Psoas muscle (tissue), 8 donors: ENCODE measurements at regions of chr15 and their contacts with region 1.

Region 1: DNA sequence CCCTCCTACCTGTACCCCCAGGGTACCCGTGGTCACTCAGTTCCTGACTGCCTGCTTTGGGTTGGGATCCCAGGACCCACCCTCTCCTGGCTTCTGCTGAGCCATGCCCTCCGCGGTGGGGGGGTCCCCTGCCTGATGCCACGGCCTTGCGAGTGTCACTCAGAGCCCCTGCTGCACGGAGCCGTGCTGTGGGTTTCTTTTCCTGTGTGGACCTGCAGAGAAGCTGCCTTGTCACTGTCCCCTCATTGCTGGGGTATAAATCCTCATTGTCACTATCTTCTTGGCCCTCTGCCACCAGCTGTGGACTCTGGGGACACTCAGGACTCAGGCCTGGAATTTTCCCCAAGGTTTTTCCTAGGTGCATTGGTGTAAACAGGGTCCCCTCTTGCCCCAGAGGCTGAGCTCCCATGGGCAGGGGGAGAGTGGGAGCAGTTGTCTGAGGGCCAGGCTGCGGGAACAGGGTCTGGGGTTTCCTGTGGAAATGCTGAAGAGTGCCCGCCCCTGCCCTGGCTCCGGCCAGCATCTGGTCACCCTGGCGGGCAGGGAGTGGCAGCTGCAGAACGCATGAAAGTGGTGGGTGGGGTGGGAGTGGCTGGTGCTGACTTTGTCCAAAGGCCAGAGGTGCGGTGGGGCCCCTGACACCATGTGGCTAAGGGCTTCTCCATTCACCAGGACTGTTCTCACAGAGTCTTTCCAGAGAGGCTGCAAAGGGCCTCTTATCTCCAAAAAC is 191.7 kb downstream of the GOLGA6L6 start:
- DNase-seq: peak; percentile 22 to 59
- ATAC-seq: no peak
- H3K4me3 ChIP-seq: no peak overlapping the region
- H3K27ac ChIP-seq: no peak overlapping the region
- H3K4me1 ChIP-seq: no peaks in the 10 kb centered on the region
- H3K27me3 ChIP-seq: no peaks in the 10 kb centered on the region
- CTCF ChIP-seq: no peak

Region 2: GRCh38 chr15:20368974-20369373 is 19.0 kb after region 1 on chr15:
- intact Hi-C with region 1: loop called in 1 of 2 experiments (anchors 2 kb)
- DNase-seq: no peak
- ATAC-seq: no peak
- H3K4me3 ChIP-seq: no peak overlapping the region
- H3K27ac ChIP-seq: no peak overlapping the region
- H3K4me1 ChIP-seq: no peaks in the 10 kb centered on the region
- H3K27me3 ChIP-seq: no peaks in the 10 kb centered on the region
- CTCF ChIP-seq: no peak

Region 3: DNA sequence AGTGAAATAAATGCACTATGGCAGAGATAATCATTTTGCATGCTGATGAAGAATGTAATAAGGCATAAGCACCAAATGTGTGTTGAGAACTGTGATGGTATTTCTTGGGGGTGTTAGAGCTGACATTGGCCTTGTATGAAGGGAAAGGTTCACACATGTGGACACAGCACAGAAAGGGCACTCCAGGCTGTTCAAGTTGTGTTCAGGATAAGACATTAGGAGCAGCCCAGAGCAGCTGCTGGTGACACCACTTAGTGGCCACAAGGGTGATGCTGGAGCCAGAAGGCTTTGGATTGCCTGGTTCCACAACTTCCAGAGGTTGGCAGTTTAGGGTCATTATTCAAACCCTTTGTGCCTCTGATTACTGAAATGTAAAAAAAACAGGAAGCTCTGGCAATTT is 36.3 kb after region 1 on chr15:
- intact Hi-C with region 1: loop called in 1 of 2 experiments (anchors 5 kb)
- DNase-seq: no peak
- ATAC-seq: no peak
- H3K4me3 ChIP-seq: no peak overlapping the region
- H3K27ac ChIP-seq: no peak overlapping the region
- H3K4me1 ChIP-seq: no peaks in the 10 kb centered on the region
- H3K27me3 ChIP-seq: no peaks in the 10 kb centered on the region
- CTCF ChIP-seq: no peak